ENCODE measurements at regions of chr20 and their contacts with region 1.

Region 1: DNA sequence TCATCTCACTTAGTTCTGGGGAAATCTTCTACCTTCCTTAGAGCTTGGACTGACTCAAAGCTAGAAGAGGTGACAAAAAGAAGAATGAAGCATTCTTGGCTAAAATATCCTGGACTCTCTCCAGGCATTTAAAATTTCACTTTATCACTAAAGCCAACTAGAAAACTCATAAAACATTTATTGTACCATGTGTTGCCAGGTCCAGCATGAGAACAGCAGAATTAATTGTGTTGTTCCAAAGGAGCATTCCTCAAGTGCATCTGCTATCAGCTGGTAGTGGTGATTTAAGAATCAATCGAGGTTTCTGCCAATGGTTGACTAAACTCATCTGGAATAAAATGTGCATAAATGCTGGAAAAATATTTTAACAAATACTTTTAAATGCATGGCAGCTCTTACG is 147.3 kb upstream of the SSTR4 start:
- DNase-seq: no peak
- H3K4me3 ChIP-seq: no peak overlapping the region
- H3K27ac ChIP-seq: no peak overlapping the region
- H3K4me1 ChIP-seq: no peaks in the 10 kb centered on the region
- H3K27me3 ChIP-seq: no peaks in the 10 kb centered on the region
- CTCF ChIP-seq: no peak
- POLR2A ChIP-seq: no peak

Region 2: GRCh38 chr20:22825076-22825475 is 62.7 kb before region 1 on chr20:
- intact Hi-C with region 1: loop called in 1 of 2 experiments (anchors 10 kb)
- DNase-seq: no peak
- H3K4me3 ChIP-seq: no peak overlapping the region
- H3K27ac ChIP-seq: no peak overlapping the region
- H3K4me1 ChIP-seq: no peaks in the 10 kb centered on the region
- H3K27me3 ChIP-seq: no peaks in the 10 kb centered on the region
- CTCF ChIP-seq: no peak
- POLR2A ChIP-seq: no peak

Region 3: DNA sequence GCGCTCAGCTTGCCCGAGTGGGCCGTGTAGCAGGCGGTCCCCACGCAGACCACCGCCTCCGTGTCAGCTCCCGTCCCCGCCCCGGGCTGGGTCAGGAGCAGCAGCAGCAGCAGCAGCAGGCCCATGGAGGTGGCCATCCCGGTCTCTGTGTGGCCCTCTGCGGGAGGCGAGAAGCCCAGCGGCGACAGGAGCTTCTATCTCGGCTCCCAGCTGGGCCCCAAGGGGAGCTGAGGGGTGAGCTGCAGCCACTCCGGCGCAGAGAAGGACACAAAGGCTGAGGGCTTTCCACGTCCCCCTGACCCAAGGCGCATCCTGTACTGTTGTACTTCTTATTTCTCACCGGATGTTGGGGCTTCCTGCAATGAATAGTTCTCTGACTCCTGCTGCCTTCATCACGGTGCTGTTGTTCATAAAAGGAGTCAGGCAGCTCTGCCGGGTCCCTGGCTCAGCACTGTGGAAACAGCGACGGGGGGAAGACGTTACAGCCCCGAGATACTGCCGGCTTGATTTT is 198.3 kb after region 1 on chr20 and contains the start of gene CD93:
- intact Hi-C with region 1: no loop called
- DNase-seq: peak in 4 of 7 donors; percentile 53 to 77 (median 58)
- H3K4me3 ChIP-seq: peak within 1 kb of the TSS in 1 of 4 donors; percentile 46
- H3K27ac ChIP-seq: peak within 1 kb of the TSS; percentile 19 to 92 (median 70)
- H3K4me1 ChIP-seq: peaks cover 0 to 4% of the 10 kb centered on the region in 2 donors
- H3K27me3 ChIP-seq: no peaks in the 10 kb centered on the region
- CTCF ChIP-seq: no peak
- POLR2A ChIP-seq: peak; percentile 34 to 49
- total RNA-seq, gene CD93: 16.9 to 83.0 (median 47.3) TPM